Head of caudate nucleus (tissue), 42 donors: ENCODE measurements at regions of chr1 and their contacts with region 1.

Region 1: DNA sequence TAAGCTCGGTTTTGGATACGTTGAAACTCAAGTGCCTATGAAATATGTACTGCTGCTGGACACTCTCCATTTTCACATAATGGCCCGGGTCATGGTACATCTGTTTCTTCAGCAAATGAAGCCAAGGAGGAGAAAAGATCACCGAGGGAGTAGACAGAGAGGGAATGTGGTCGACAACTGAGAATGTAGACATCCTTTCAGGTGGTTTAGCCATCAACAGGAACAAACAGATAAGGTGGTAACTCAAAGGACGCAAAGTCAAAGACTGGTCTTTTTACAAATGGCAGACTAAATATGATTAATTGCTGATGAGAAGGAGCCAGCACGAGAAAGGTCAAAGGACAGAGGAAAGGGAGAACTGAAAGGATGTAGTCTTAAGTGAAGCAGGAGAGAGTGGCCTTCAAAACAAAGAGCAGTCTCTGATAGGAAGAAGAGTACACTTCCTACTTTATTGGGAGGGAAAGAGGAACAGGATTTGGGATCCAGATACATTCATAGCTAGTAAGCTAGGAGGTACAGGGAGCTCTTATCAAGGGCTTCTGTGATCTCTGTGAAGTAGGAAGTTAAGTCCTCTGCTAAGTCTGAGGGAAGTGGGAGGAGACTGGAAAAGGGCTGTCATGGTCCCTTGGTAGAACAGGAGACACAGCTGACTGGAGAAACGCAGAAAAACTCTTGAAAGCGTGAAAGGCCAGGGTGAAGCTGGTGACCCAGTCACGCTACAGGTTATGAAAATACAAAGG is 28.3 kb downstream of the NUP133 start:
- DNase-seq: no peak

Region 2: DNA sequence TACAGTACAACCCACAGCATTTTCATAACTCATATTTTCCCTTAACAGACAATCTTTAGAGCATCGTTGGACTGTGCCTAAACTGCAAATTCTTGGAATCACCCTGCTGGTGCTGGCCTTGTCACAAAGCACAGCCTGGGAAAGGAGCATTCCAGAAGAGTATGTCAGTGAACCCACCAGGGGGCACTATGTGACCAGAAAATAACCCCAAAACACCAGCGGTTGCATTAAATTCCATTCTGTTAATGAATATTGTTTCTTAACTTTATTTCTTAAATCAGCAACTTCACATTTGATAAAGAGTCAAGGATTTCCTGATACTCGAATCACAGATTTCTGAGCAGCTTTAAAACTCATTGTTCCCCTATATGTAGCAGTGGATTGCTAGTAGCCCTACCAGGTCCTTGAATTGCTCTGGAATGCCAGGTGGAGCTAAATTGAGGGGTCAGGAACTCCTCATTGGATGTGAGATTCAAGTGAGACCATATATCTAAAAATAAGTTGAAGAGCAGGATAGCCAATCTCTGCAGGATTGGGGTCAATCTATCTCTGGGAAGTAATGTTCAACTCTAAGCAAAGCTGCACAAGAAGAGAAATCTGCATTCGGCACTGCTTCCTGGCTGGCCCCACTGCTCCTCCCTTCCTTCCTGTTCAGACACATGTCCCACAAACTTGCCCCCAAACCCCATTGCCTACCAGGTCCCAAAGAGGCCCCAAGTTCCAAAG is 221.6 kb before region 1 on chr1:
- intact Hi-C with region 1: loop called (anchors 5 kb)
- DNase-seq: peak; percentile 28 to 93 (median 81)